ENCODE measurements at regions of chr1 and their contacts with region 1.

Region 1: DNA sequence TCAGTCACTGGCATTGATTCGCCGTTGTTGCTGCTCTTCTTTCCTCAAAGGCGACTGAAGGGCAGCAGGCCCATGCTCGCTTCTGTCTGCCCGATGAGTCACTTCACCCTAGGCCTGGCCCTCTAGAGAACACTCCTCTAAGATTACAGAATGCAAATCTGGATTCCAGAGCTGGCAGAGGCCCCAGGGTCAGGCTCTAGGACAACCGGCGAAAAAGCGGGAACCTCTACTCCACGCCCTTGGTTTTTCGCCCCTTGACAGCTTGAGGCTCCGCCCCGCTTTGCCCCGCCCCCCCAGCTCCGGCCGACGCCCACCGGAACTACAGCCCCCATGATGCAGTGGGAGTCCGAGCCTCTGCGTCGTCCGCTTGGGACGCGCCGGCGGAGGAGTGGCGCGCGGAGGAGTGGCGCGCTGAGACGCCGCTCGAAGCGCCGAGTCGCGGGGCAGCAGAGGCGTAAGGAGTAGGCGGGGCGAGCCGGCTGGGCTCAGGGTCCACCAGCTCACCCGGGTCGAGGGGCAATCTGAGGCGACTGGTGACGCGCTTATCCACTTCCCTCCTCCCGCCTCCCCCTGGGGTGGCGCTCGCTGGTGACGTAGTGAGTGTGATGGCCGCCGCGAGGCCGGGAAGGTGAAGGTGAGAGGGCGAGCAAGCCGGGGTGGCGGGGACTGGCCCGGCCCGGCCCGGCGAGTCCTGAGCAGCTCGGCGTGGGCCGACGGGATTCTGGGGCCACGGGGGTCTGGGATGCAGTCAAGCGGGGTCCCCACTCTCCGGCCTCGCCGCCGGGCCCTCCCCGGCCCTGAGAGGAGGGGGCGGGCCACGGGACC is at the start of gene MFN2:
- DNase-seq: peak; percentile 94
- ATAC-seq: peak; percentile 94
- H3K4me3 ChIP-seq: peak within 1 kb of the TSS; percentile 73 to 83
- H3K27ac ChIP-seq: peak within 1 kb of the TSS; percentile 89
- H3K4me1 ChIP-seq: peaks cover 21 to 24% of the 10 kb centered on the region in 2 experiments
- H3K27me3 ChIP-seq: no peaks in the 10 kb centered on the region
- CTCF ChIP-seq: no peak
- POLR2A ChIP-seq: peak; percentile 83
- RAD21 ChIP-seq: no peak
- total RNA-seq, gene MFN2: 83.0 TPM

Region 2: DNA sequence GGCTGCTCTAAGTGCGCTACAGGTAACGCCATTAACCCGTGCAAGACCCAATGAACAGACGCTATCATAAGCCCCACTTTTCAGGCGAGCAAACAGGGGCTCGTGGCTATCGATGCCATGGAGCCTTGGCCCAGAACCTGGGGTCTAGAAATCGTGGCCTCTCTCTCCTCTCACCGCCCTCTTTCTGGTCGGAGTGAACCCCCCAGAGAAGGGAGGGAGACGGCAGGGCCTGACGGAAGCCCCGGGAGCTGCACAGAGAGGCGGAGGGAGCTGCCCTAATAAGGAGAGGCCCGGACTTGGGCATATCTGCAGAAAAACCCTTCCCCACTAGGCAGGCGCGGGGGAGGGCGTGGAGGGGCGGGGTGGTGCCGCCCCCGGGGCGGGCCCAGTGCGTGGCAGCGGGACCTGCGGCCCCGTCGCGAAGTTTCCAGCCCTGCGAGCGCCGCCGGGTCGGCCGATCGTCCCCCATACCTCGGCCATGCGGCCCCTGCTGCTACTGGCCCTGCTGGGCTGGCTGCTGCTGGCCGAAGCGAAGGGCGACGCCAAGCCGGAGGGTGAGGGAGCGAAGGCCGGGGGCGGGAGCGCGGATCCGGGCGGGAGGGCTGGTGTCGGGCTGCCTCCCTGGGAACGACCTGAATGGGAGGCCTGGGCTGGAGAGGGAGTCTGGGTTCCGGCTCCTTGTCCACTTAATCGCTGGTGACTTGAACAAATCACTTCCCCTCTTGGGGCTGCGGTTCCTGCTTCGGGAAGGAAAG is 45.6 kb before region 1 on chr1 and contains the start of gene PLOD1:
- CTCF ChIA-PET with region 1: interaction called, 5 read pairs
- POLR2A ChIA-PET with region 1: interaction called, 3 read pairs
- RAD21 ChIA-PET with region 1: interaction called in 1 of 2 experiments, 4 read pairs
- intact Hi-C with region 1: loop called (anchors 5 kb)
- DNase-seq: no peak
- ATAC-seq: peak; percentile 88
- H3K4me3 ChIP-seq: peak within 1 kb of the TSS; percentile 86 to 88
- H3K27ac ChIP-seq: peak within 1 kb of the TSS; percentile 67
- H3K4me1 ChIP-seq: peaks cover 35 to 72% of the 10 kb centered on the region in 2 experiments
- H3K27me3 ChIP-seq: no peaks in the 10 kb centered on the region
- CTCF ChIP-seq: no peak
- POLR2A ChIP-seq: peak; percentile 80
- RAD21 ChIP-seq: no peak
- total RNA-seq, gene PLOD1: 175 TPM

Measured in HCT116 (cell line).